Vagina (tissue), 2 donors: ENCODE measurements at regions of chr15 and their contacts with region 1.

Region 1: DNA sequence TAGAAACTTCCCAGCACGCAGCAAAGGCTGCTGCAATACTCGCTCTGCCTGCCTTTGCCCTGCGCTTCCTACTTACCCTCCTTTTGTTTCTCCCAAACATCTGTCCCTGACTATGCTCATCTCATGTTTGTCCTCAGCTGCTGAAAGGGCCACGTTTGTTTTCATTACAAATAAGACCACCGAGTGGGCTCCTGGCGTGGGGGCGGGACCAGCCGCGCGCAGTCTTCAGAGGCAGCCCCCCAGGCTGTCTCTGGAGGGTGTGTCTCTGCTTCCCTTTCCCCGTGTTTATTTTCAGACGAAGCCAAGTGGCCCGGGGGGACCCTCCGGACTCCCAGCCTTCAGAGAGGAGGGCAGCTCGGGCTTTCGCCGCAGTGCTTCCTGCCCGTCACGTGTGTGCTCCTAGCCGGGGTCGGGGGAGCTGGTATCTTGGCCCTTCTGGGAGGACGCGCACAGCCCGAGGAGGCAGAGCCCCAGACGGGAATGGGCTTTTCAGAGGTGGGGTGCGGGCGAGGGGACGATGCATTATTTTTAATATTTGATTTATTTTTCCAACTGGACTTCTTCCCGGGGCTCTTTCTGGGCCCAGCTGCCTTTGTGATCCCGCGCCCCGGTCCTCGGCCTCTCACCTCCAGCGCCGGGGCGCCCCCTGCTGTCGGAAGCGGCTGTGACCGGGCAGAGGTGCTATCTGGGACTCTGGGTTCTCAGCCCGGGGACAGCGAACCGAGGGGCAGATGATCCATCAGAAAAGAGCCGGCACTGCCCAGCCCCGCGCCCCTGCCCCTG is 70.0 kb upstream of the CGNL1 start:
- DNase-seq: peak in 1 of 2 donors; percentile 86
- H3K4me3 ChIP-seq: peak overlapping the region; percentile 47 to 51
- H3K27ac ChIP-seq: peak overlapping the region; percentile 60
- H3K4me1 ChIP-seq: peaks cover 18% of the 10 kb centered on the region
- H3K27me3 ChIP-seq: no peaks in the 10 kb centered on the region
- CTCF ChIP-seq: peak; percentile 82 to 91 (median 87)
- POLR2A ChIP-seq: no peak

Region 2: GRCh38 chr15:56491110-56491722 is 815.1 kb before region 1 on chr15:
- intact Hi-C with region 1: loop called (anchors 10 kb)
- DNase-seq: no peak
- H3K4me3 ChIP-seq: no peak overlapping the region
- H3K27ac ChIP-seq: no peak overlapping the region
- H3K4me1 ChIP-seq: no peaks in the 10 kb centered on the region
- H3K27me3 ChIP-seq: no peaks in the 10 kb centered on the region
- CTCF ChIP-seq: peak; percentile 53 to 57 (median 53)
- POLR2A ChIP-seq: no peak

Region 3: DNA sequence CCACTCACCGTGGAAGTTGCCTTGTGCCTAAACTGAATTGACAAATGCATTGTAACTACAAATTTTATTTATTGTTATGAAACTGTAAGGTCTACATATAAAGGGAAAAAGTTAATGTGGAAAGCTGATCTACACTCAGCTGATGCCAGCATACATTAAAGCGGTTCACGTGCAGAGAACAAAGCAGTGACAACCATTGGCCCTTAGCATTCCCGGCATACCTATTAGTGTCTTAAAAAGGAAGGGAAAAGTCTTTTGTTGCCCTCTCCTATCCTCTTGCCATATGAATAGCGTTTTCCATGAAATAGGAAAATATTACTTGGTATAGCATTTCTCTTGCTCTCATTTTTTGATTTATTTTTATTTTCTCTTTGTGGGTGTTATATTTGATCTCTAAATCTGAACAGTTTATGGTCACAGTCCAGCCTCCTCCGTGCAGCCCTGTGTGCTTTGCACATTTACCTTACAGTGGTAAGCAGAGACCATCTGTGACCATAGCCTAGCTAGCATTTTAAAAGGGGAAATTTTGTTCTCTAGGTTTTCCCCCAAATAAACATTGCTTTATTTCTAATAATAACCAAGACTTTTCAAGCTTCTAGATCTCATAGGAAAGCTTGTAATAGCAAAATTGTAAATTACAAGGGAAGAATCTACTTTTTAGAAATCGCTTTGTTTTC is 19.8 kb before region 1 on chr15:
- intact Hi-C with region 1: loop called (anchors 1 kb)
- DNase-seq: no peak
- H3K4me3 ChIP-seq: no peak overlapping the region
- H3K27ac ChIP-seq: no peak overlapping the region
- H3K4me1 ChIP-seq: peaks cover 12% of the 10 kb centered on the region
- H3K27me3 ChIP-seq: no peaks in the 10 kb centered on the region
- CTCF ChIP-seq: no peak
- POLR2A ChIP-seq: no peak